HepG2 (cell line): ENCODE measurements at regions of chr19 and their contacts with region 1.

Region 1: GRCh38 chr19:1672038-1672768 is 19.8 kb upstream of the TCF3 start:
- DNase-seq: no peak
- ATAC-seq: peak; percentile 33
- H3K4me3 ChIP-seq: peak overlapping the region in 2 of 3 experiments; percentile 16 to 66; a peak in 2 of 6 replicates
- H3K27ac ChIP-seq: no peak overlapping the region
- H3K4me1 ChIP-seq: no peaks in the 10 kb centered on the region; the same call in 1 of the 2 replicates
- H3K27me3 ChIP-seq: peaks cover 13 to 60% of the 10 kb centered on the region in 2 experiments
- CTCF ChIP-seq: peak; percentile 74
- EP300 ChIP-seq: no peak
- POLR2A ChIP-seq: no peak
- RAD21 ChIP-seq: peak; percentile 80

Region 2: DNA sequence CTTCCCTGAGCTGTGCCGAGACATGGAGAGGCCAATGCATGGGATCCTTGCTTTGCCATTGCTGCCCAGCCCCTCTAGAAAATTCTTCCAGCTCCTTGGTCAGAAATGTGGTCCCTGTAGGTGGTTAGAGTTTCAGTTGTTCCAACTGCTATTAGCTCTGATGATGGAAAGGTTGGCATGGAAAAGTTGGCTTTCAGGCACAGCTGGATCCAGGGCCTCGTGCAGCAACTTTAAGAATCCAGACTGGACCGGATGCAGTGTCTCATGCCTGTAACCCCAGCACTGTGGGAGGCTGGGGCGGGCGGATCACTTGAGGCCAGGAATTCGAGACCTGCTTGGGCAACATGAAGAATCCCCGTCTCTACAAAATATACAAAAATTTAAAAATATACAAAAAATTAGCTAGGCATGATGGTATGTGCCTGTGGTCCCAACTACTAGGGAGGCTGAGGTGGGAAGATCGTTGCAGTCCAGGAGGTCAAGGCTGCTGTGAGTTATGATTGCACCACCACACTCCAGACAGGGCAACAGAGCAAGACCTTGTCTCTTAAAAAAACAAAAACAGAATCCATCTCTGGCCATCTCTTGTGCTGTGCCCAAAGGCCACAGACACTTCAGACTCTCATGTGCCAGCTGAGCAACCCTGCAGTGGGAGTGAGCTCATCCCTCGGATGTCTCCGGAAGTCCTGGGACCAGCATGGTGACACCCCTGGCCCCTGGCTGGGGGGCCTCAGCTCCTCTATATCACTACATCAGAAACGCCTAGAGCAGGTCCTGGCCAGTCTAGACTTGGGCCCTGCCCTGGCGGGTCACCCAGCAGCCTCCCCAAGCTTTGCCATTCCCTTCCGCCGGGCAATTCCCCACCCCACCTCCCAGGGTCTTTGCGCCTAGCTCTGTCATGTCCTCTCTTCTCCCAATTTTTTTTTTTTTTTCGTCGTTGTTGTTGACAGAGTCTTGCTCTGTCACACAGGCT is 120.8 kb before region 1 on chr19:
- CTCF ChIA-PET with region 1: interaction called, 3 read pairs
- POLR2A ChIA-PET with region 1: no interaction called
- in situ Hi-C with region 1: loop called (anchors 5 kb)
- intact Hi-C with region 1: loop called (anchors 2 kb)
- DNase-seq: no peak
- ATAC-seq: peak; percentile 20; the same call in 2 of the 3 replicates
- H3K4me3 ChIP-seq: no peak overlapping the region
- H3K27ac ChIP-seq: no peak overlapping the region
- H3K4me1 ChIP-seq: peaks cover 21% of the 10 kb centered on the region
- H3K27me3 ChIP-seq: no peaks in the 10 kb centered on the region
- CTCF ChIP-seq: no peak
- EP300 ChIP-seq: no peak
- POLR2A ChIP-seq: no peak
- RAD21 ChIP-seq: no peak

Region 3: GRCh38 chr19:1655131-1655981 is 16.8 kb before region 1 on chr19:
- CTCF ChIA-PET with region 1: no interaction called
- POLR2A ChIA-PET with region 1: no interaction called
- in situ Hi-C with region 1: no loop called
- intact Hi-C with region 1: no loop called
- DNase-seq: no peak
- ATAC-seq: peak; percentile 27
- H3K4me3 ChIP-seq: peak overlapping the region in 2 of 3 experiments; percentile 7 to 43; a peak in 1 of 6 replicates
- H3K27ac ChIP-seq: no peak overlapping the region
- H3K4me1 ChIP-seq: peaks cover 44% of the 10 kb centered on the region
- H3K27me3 ChIP-seq: peaks cover 5 to 53% of the 10 kb centered on the region in 2 experiments; a peak in 4 of 5 replicates
- CTCF ChIP-seq: no peak
- EP300 ChIP-seq: no peak
- POLR2A ChIP-seq: no peak
- RAD21 ChIP-seq: no peak

Region 4: GRCh38 chr19:1767464-1767933 is 95.3 kb after region 1 on chr19:
- CTCF ChIA-PET with region 1: interaction called, 38 read pairs
- POLR2A ChIA-PET with region 1: no interaction called
- in situ Hi-C with region 1: loop called (anchors 5 kb)
- intact Hi-C with region 1: no loop called
- DNase-seq: no peak
- ATAC-seq: peak; percentile 70
- H3K4me3 ChIP-seq: no peak overlapping the region
- H3K27ac ChIP-seq: no peak overlapping the region
- H3K4me1 ChIP-seq: no peaks in the 10 kb centered on the region
- H3K27me3 ChIP-seq: peaks cover 11 to 60% of the 10 kb centered on the region in 2 experiments
- CTCF ChIP-seq: peak; percentile 93
- EP300 ChIP-seq: no peak
- POLR2A ChIP-seq: no peak
- RAD21 ChIP-seq: peak; percentile 70